ENCODE measurements at regions of chr1 and their contacts with region 1.

Region 1: GRCh38 chr1:155989242-155990004 is 11.1 kb upstream of the ARHGEF2 start:
- DNase-seq: peak; percentile 82
- ATAC-seq: peak; percentile 94

Region 2: GRCh38 chr1:155938220-155938627 is 51.2 kb before region 1 on chr1:
- intact Hi-C with region 1: loop called (anchors 2 kb)
- DNase-seq: no peak
- ATAC-seq: peak; percentile 27

Measured in Right ventricle myocardium superior (tissue), 1 donor.